ENCODE measurements at regions of chr13 and their contacts with region 1.

Region 1: DNA sequence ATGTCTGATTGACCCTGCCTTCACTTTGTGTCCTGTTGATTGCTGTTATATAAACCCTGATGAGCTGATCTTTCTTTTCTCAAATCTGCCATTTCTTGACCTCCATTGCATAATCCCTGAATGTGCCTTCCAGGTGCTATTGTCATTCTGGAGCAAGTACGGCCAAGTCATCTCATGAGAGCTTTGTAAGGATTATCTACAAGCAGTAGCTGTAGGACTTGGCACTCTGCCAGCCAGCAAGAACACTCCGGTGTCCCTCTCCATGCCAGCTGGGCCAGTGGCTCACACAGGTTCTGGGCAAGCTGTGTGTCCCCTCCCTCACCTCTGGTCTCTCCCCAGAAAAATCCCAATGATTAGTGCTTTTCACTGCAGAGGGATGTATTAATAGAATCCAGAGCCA is 348.1 kb downstream of the FOXO1 start:
- DNase-seq: peak; percentile 55
- H3K4me3 ChIP-seq: no peak overlapping the region
- H3K27ac ChIP-seq: no peak overlapping the region
- H3K4me1 ChIP-seq: peaks cover 16% of the 10 kb centered on the region
- H3K27me3 ChIP-seq: no peaks in the 10 kb centered on the region
- CTCF ChIP-seq: no peak
- POLR2A ChIP-seq: no peak

Region 2: GRCh38 chr13:39876258-39876657 is 442.1 kb before region 1 on chr13:
- CTCF ChIA-PET with region 1: no interaction called
- POLR2A ChIA-PET with region 1: no interaction called
- dilution Hi-C with region 1: no loop called
- intact Hi-C with region 1: loop called (anchors 5 kb)
- DNase-seq: peak; percentile 90
- H3K4me3 ChIP-seq: no peak overlapping the region
- H3K27ac ChIP-seq: peak overlapping the region; percentile 98
- H3K4me1 ChIP-seq: peaks cover 67% of the 10 kb centered on the region
- H3K27me3 ChIP-seq: no peaks in the 10 kb centered on the region
- CTCF ChIP-seq: no peak
- POLR2A ChIP-seq: peak; percentile 25

Region 3: GRCh38 chr13:40069173-40070044 is 249.0 kb before region 1 on chr13:
- CTCF ChIA-PET with region 1: interaction called, 4 read pairs
- POLR2A ChIA-PET with region 1: no interaction called
- dilution Hi-C with region 1: no loop called
- intact Hi-C with region 1: loop called (anchors 2 kb)
- DNase-seq: peak; percentile 69
- H3K4me3 ChIP-seq: no peak overlapping the region
- H3K27ac ChIP-seq: no peak overlapping the region
- H3K4me1 ChIP-seq: peaks cover 5% of the 10 kb centered on the region
- H3K27me3 ChIP-seq: no peaks in the 10 kb centered on the region
- CTCF ChIP-seq: peak; percentile 69 to 82
- POLR2A ChIP-seq: no peak

Region 4: GRCh38 chr13:40130871-40131636 is 187.3 kb before region 1 on chr13:
- CTCF ChIA-PET with region 1: no interaction called
- POLR2A ChIA-PET with region 1: no interaction called
- dilution Hi-C with region 1: no loop called
- intact Hi-C with region 1: loop called (anchors 1 kb)
- DNase-seq: peak; percentile 93
- H3K4me3 ChIP-seq: no peak overlapping the region
- H3K27ac ChIP-seq: peak overlapping the region; percentile 60
- H3K4me1 ChIP-seq: peaks cover 13% of the 10 kb centered on the region
- H3K27me3 ChIP-seq: no peaks in the 10 kb centered on the region
- CTCF ChIP-seq: no peak
- POLR2A ChIP-seq: no peak

Region 5: GRCh38 chr13:40352380-40352778 is 34.0 kb after region 1 on chr13:
- CTCF ChIA-PET with region 1: no interaction called
- POLR2A ChIA-PET with region 1: no interaction called
- dilution Hi-C with region 1: no loop called
- intact Hi-C with region 1: no loop called
- DNase-seq: no peak
- H3K4me3 ChIP-seq: no peak overlapping the region
- H3K27ac ChIP-seq: no peak overlapping the region
- H3K4me1 ChIP-seq: no peaks in the 10 kb centered on the region
- H3K27me3 ChIP-seq: no peaks in the 10 kb centered on the region
- CTCF ChIP-seq: no peak
- POLR2A ChIP-seq: no peak

Region 6: GRCh38 chr13:40503966-40504591 is 185.7 kb after region 1 on chr13:
- CTCF ChIA-PET with region 1: interaction called, 3 read pairs
- POLR2A ChIA-PET with region 1: no interaction called
- dilution Hi-C with region 1: no loop called
- intact Hi-C with region 1: loop called (anchors 1 kb)
- DNase-seq: peak; percentile 99
- H3K4me3 ChIP-seq: no peak overlapping the region
- H3K27ac ChIP-seq: peak overlapping the region; percentile 99
- H3K4me1 ChIP-seq: peaks cover 51% of the 10 kb centered on the region
- H3K27me3 ChIP-seq: no peaks in the 10 kb centered on the region
- CTCF ChIP-seq: no peak
- POLR2A ChIP-seq: peak; percentile 74

Region 7: DNA sequence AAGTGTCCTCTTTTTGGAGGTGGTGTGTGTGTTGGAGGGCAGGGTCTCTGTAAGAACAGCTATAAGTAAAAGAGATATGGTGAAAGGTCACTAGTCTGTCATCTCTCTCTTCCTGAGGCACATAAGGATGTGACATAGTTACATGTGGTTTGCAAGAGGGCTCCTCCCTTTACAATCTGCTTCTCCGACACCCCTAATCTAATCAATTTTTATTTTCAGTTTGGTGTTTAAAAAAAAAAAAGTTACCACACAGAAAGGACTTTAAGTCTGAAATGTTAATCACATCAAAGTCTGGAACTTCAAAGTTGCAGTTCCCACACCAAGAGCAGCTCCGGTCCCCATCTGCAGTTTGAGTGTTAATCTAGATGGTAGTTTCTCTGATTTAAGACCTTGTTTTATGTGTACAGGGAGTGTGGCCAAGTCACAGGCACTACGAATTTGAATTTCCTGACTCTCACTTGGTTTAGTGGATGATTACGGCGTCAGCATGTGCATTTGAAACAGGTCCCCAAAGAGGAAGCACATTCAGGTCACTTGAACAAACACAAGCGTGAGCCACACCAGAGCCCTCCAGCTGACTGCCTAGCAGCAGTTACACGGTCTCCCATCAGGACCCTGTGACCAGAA is 294.9 kb after region 1 on chr13:
- CTCF ChIA-PET with region 1: no interaction called
- POLR2A ChIA-PET with region 1: no interaction called
- dilution Hi-C with region 1: no loop called
- intact Hi-C with region 1: loop called (anchors 2 kb)
- DNase-seq: peak; percentile 70
- H3K4me3 ChIP-seq: no peak overlapping the region
- H3K27ac ChIP-seq: peak overlapping the region; percentile 98
- H3K4me1 ChIP-seq: peaks cover 75% of the 10 kb centered on the region
- H3K27me3 ChIP-seq: no peaks in the 10 kb centered on the region
- CTCF ChIP-seq: no peak
- POLR2A ChIP-seq: no peak

Measured in endothelial cell of umbilical vein (primary cell).